Activated CD8-positive, alpha-beta T cell treated with anti-CD3 and anti-CD28 coated beads for 36 hours (primary cell): ENCODE measurements at regions of chr10 and their contacts with region 1.

Region 1: DNA sequence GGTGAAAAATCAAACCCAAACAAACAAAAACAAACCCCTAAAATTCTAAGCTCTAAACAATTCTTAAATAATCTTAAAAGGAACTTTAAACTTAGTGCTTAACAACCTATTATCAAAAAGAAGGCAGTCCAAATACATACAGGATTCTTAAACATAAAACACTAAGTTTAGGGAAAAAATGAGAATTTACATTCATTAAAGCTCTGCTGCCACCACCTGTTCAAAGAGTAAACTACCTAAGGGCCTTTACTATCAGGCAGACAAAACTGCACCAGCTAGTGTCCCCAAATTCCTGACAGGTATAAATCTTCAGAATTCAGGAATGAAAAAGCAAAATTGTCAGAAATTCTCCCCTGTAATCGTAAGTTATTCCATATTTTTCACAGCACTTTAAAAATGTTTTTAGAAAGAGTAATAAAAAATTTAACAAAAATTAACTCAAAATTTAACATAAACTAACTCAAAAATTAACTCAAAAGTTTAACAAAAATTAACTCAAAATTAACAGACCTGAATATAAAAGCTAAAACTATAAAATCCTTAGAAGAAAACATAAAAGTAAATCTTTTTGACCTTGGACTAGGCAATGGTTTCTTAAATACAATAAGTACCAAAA is 55.1 kb downstream of the PDZD8 start:
- DNase-seq: no peak
- ATAC-seq: peak; percentile 49
- H3K4me3 Mint-ChIP-seq: no peak overlapping the region
- H3K27ac Mint-ChIP-seq: no peak overlapping the region
- H3K4me1 Mint-ChIP-seq: peaks cover 2% of the 10 kb centered on the region
- H3K27me3 Mint-ChIP-seq: no peaks in the 10 kb centered on the region
- CTCF ChIP-seq: peak; percentile 68

Region 2: GRCh38 chr10:117237401-117237991 is 82.7 kb before region 1 on chr10:
- CTCF ChIA-PET with region 1: no interaction called
- POLR2A ChIA-PET with region 1: no interaction called
- intact Hi-C with region 1: no loop called
- DNase-seq: no peak
- ATAC-seq: no peak
- H3K4me3 Mint-ChIP-seq: no peak overlapping the region
- H3K27ac Mint-ChIP-seq: no peak overlapping the region
- H3K4me1 Mint-ChIP-seq: peaks cover 3% of the 10 kb centered on the region
- H3K27me3 Mint-ChIP-seq: peaks cover 20% of the 10 kb centered on the region
- CTCF ChIP-seq: no peak

Region 3: GRCh38 chr10:117274509-117274908 is 45.6 kb before region 1 on chr10:
- CTCF ChIA-PET with region 1: no interaction called
- POLR2A ChIA-PET with region 1: no interaction called
- intact Hi-C with region 1: no loop called
- DNase-seq: no peak
- ATAC-seq: no peak
- H3K4me3 Mint-ChIP-seq: no peak overlapping the region
- H3K27ac Mint-ChIP-seq: no peak overlapping the region
- H3K4me1 Mint-ChIP-seq: no peaks in the 10 kb centered on the region
- H3K27me3 Mint-ChIP-seq: no peaks in the 10 kb centered on the region
- CTCF ChIP-seq: no peak

Region 4: DNA sequence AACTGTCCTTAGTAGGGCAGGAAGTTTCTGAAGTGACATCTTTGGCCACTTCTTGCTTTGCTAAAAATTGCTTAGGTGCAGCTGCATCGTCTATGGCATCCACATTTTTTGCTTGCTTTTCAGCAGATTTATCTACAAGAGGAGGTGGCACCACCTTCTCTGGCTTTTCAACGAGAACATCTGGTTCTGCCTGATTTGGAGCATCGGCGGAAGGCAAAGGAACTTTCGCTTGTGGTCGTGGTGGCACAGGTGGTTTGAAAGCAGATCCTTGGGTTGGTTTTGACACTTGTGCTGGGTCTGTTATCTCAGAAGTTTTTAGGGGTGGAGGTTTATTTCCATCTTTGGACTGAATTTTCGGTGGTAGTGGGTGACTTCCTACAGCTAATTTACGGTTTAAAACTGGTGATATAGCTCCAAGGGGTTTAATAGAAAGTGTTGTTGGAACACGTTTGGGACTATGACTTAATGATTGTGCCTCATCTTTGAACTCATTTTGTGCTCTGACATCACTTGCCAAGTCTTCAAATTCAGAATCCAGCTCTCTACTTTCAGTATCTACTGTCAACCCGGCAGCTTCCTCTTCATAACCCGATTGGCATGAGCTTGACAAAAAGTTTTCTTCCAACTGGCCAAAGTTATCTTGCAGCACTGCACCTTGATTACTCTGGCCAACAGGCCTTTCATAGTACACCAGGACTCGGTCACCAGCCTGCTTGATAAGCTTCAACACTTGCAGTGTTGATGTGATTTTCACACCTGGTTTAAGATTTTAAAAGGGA is 35.3 kb before region 1 on chr10:
- CTCF ChIA-PET with region 1: interaction called, 21 read pairs
- POLR2A ChIA-PET with region 1: no interaction called
- intact Hi-C with region 1: no loop called
- DNase-seq: no peak
- ATAC-seq: no peak
- H3K4me3 Mint-ChIP-seq: no peak overlapping the region
- H3K27ac Mint-ChIP-seq: no peak overlapping the region
- H3K4me1 Mint-ChIP-seq: peaks cover 3% of the 10 kb centered on the region
- H3K27me3 Mint-ChIP-seq: no peaks in the 10 kb centered on the region
- CTCF ChIP-seq: no peak